ENCODE measurements at regions of chr6 and their contacts with region 1.

Region 1: GRCh38 chr6:135440087-135440792 is 57.3 kb downstream of the AHI1 start:
- DNase-seq: no peak
- ATAC-seq: no peak
- H3K4me3 ChIP-seq: no peak overlapping the region
- H3K27ac ChIP-seq: no peak overlapping the region
- H3K4me1 ChIP-seq: no peaks in the 10 kb centered on the region
- H3K27me3 ChIP-seq: no peaks in the 10 kb centered on the region

Region 2: DNA sequence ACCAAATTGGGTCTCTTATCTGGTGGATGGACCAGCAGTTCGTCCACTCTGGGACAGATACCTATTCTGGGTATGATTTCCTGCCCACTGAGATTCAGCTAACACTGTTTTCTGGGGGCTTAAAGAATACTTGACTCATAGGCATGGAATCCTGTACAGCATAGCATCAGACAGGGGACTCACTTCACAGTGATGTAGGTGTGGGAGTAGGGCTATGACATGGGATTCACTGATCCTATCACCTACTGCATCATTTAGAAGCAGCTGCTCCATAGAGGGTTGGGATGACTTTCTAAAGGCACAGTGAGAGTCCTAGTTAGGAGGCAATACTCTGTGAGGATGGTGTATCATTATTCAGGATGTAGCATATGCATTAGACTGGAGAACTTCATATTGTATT is 131.8 kb after region 1 on chr6:
- intact Hi-C with region 1: loop called in 1 of 2 experiments (anchors 5 kb)
- DNase-seq: no peak
- ATAC-seq: no peak
- H3K4me3 ChIP-seq: no peak overlapping the region
- H3K27ac ChIP-seq: no peak overlapping the region
- H3K4me1 ChIP-seq: no peaks in the 10 kb centered on the region
- H3K27me3 ChIP-seq: peaks cover 0 to 3% of the 10 kb centered on the region in 2 donors

Region 3: DNA sequence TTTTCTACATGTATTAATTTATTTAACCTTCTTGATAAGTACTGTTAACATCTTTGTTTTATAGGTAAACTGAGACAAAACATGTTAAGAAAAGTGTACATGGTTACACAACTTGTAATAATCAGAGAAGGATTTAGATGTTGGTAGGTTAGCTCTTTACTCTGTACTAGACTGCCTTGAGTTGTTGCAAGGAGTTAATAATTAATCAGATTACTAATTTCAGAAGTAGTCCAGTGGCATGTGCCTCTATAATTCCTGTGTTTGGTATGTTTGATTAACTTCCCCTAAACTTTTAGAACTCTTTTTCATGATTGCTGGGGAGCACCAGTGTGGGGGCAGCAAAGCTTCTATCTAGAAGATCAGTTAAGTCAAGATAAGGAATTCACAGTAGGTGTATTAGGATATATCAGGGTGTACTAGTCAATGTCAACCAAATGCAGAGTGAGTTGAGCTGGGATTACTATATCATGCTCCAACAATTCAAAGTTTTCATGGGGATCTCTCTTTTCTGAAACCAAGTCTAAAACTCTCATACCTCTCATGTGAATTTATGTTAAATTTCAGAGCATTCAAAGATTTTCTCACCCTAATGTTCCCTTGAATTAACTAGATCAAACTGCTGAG is 187.0 kb after region 1 on chr6:
- intact Hi-C with region 1: no loop called
- DNase-seq: no peak
- ATAC-seq: no peak
- H3K4me3 ChIP-seq: no peak overlapping the region
- H3K27ac ChIP-seq: no peak overlapping the region
- H3K4me1 ChIP-seq: no peaks in the 10 kb centered on the region
- H3K27me3 ChIP-seq: no peaks in the 10 kb centered on the region